Esophagus squamous epithelium (tissue), 5 donors: ENCODE measurements at regions of chr14 and their contacts with region 1.

Region 1: GRCh38 chr14:73825551-73826188 is 26.0 kb upstream of the PTGR2 start:
- DNase-seq: peak; percentile 61
- H3K4me3 ChIP-seq: no peak overlapping the region
- H3K27ac ChIP-seq: peak overlapping the region in 1 of 4 donors; percentile 83
- H3K4me1 ChIP-seq: peaks cover 4 to 31% (median 7%) of the 10 kb centered on the region in 3 donors
- H3K27me3 ChIP-seq: no peaks in the 10 kb centered on the region
- CTCF ChIP-seq: peak; percentile 76 to 96 (median 94)
- POLR2A ChIP-seq: no peak

Region 2: GRCh38 chr14:73728717-73729330 is 96.8 kb before region 1 on chr14:
- intact Hi-C with region 1: loop called (anchors 5 kb)
- DNase-seq: no peak
- H3K4me3 ChIP-seq: no peak overlapping the region
- H3K27ac ChIP-seq: peak overlapping the region; percentile 54 to 87 (median 76)
- H3K4me1 ChIP-seq: peaks cover 9 to 74% (median 48%) of the 10 kb centered on the region in 3 donors
- H3K27me3 ChIP-seq: no peaks in the 10 kb centered on the region
- CTCF ChIP-seq: peak; percentile 93 to 97 (median 95)
- POLR2A ChIP-seq: no peak